ENCODE measurements at regions of chr4 and their contacts with region 1.

Region 1: DNA sequence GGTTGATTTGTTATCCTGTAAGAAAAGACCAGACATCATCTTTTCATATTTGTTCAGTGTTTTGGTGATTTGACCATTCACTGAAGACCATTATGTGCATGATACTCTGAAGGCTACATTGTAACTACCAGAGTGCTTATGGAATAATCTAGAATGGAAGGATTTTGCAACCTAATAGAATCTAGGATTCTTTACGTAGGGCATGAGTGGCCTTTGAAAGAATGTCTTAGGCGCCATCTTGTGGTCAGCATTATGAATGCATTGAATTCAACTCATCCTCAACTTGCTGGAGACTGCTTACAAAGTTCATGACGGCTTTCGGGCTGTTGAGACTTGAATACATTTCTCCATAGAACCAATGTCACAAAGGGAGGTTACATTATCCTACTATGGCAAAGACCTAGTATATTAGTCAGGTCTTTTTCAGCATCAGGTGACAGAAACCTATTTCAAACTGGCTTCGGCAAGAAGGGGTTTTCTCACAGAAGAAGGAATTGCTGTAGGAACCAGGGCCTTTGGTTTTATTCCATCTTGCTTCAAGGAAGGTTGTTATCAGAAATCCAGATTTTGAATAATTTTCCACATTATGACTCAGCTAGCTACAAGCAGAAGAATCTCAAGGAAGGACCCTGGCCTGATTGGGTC is 104.1 kb downstream of the GPAT3 start:
- DNase-seq: peak; percentile 74
- H3K4me3 Mint-ChIP-seq: no peak overlapping the region
- H3K27ac Mint-ChIP-seq: no peak overlapping the region
- H3K4me1 Mint-ChIP-seq: peaks cover 3% of the 10 kb centered on the region
- H3K27me3 Mint-ChIP-seq: no peaks in the 10 kb centered on the region

Region 2: DNA sequence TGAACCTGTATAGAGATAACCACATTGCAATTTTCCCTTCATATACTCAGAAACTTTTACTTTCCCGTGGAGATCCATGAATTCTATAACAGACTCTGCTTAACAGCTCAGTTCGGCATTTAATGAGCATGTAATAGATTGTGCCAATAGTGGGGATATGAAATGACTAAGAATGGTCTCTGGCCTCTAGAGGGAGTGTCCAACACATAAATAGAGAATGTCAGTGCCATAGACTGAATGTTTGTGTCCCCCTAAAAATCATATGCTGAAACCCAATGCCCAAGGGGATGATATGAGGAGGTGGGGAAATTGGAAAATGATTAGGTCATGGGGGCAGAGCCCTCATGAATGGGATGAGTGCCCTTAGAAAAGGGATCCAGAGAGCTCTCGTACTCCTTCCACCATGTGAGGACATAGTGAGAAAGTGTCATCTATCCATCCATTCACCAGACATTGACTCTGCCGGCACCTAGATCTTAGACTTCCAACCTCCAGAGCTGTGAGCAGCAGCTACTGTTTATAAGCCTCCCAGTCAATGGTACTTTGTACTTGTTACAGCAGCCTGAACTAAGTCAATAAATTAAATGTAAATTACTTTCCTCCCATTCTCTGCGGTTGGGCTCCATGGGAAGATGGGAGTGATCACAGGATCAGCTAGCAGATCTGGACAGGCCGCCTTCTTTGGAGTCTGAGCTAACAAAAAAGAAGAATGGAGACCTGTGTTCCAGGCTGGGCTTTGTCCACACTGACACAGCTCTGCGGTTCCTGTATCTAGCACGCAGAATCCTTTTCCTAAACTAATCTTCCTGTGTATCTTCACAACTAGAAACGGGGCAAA is 277.3 kb before region 1 on chr4:
- CTCF ChIA-PET with region 1: no interaction called
- intact Hi-C with region 1: loop called (anchors 1 kb)
- DNase-seq: no peak
- H3K4me3 Mint-ChIP-seq: no peak overlapping the region
- H3K27ac Mint-ChIP-seq: no peak overlapping the region
- H3K4me1 Mint-ChIP-seq: peaks cover 1% of the 10 kb centered on the region
- H3K27me3 Mint-ChIP-seq: peaks cover 3% of the 10 kb centered on the region

Region 3: GRCh38 chr4:83490876-83491450 is 149.0 kb before region 1 on chr4:
- CTCF ChIA-PET with region 1: interaction called, 35 read pairs
- intact Hi-C with region 1: loop called (anchors 1 kb)
- DNase-seq: peak; percentile 16
- H3K4me3 Mint-ChIP-seq: no peak overlapping the region
- H3K27ac Mint-ChIP-seq: no peak overlapping the region
- H3K4me1 Mint-ChIP-seq: peaks cover 2% of the 10 kb centered on the region
- H3K27me3 Mint-ChIP-seq: no peaks in the 10 kb centered on the region

Region 4: GRCh38 chr4:83510442-83510841 is 129.5 kb before region 1 on chr4:
- CTCF ChIA-PET with region 1: interaction called, 54 read pairs
- intact Hi-C with region 1: loop called (anchors 1 kb)
- DNase-seq: no peak
- H3K4me3 Mint-ChIP-seq: no peak overlapping the region
- H3K27ac Mint-ChIP-seq: no peak overlapping the region
- H3K4me1 Mint-ChIP-seq: no peaks in the 10 kb centered on the region
- H3K27me3 Mint-ChIP-seq: no peaks in the 10 kb centered on the region

Region 5: DNA sequence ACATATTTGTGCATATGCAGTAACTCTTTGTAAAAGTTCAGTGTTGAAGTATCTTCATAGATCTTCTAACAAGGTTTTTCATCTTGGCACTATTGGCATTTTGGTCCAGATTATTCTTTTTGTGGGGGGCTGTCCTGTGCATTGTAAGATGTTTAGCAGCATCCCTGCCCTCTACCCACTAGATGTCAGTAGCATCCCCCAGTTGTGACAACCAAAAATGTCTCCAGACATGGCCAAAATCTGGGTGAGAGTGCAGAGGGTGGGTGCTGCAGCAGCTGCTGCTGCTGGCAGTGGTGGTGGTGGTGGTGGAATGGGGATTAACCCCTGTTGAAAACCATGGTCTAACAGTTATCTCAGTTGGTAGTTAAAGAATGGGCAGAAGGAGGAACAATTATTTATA is 266.0 kb after region 1 on chr4:
- CTCF ChIA-PET with region 1: no interaction called
- intact Hi-C with region 1: no loop called
- DNase-seq: no peak
- H3K4me3 Mint-ChIP-seq: no peak overlapping the region
- H3K27ac Mint-ChIP-seq: no peak overlapping the region
- H3K4me1 Mint-ChIP-seq: no peaks in the 10 kb centered on the region
- H3K27me3 Mint-ChIP-seq: peaks cover 3% of the 10 kb centered on the region

Region 6: DNA sequence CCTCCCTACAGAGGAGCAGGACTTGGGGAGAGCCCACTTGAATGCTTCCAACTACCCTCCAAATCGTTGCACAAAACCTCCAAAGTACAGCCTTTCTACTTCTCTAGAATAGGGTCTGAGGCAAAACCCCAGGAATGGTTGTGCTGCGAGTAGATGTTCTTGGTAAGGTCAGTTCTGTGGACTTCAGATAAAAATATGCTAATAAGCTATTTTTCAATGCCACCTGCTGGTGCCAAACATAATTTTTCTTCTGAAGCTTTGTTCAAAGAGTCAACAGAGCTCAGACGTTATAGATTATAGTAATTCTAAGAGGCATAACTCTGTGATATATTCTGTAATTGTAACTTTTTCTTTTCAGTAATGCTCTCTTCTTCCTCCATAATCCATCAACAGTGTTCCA is 321.6 kb after region 1 on chr4:
- CTCF ChIA-PET with region 1: no interaction called
- intact Hi-C with region 1: loop called (anchors 5 kb)
- DNase-seq: no peak
- H3K4me3 Mint-ChIP-seq: no peak overlapping the region
- H3K27ac Mint-ChIP-seq: no peak overlapping the region
- H3K4me1 Mint-ChIP-seq: no peaks in the 10 kb centered on the region
- H3K27me3 Mint-ChIP-seq: no peaks in the 10 kb centered on the region

Region 7: GRCh38 chr4:84529169-84529751 is 889.3 kb after region 1 on chr4:
- CTCF ChIA-PET with region 1: interaction called, 3 read pairs
- intact Hi-C with region 1: loop called (anchors 1 kb)
- DNase-seq: no peak
- H3K4me3 Mint-ChIP-seq: no peak overlapping the region
- H3K27ac Mint-ChIP-seq: no peak overlapping the region
- H3K4me1 Mint-ChIP-seq: no peaks in the 10 kb centered on the region
- H3K27me3 Mint-ChIP-seq: peaks cover 16% of the 10 kb centered on the region